ENCODE measurements at regions of chr2 and their contacts with region 1.

Region 1: DNA sequence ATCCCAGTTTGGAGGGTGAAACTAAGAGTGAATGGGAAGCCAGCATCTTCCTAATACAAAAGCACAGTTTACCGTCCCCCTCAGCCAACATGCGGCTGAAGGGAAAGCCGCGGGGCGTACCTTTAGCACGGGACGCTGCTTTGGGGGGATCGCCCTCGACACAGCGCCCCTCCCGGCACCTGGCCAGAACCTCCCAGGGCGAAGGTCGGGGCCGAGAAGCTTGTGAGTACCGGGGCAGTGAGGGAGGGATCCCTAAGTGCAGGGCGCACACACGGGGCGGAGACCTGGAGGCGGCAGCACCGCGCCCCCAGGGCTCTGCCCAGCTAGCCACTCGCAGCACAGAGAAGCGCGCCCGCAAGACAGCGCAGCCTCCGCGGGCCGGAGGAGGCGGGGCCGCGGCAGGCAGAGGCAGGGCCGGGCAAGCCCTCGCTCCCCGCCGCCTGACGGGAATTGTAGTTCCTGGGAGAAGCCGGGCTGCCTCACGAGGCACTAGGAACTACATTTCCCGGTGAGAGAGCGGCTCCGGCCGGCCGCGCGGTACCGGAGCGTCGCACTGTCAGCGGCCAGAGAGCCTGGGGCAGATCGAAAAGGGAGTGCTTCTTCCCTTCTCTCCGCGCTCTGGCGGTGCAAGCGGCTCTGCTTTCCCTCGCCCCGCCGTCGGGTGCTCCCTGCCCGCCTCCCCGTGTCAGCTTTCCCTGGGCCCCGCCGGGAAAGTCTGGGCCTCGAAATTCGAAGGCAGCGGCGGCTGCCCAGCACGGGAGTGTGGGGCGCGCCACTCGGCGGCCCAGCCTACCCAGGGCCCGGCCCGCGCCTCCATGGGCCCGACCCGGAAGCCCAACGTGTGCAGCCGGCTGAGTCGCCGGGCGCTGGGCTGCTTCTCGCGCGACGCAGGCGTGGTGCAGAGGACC is at the starts of genes DCAF17 and METTL8:
- DNase-seq: peak; percentile 97
- ATAC-seq: peak; percentile 99
- total RNA-seq, gene DCAF17: 5.8 TPM
- total RNA-seq, gene METTL8: 8.2 TPM

Region 2: DNA sequence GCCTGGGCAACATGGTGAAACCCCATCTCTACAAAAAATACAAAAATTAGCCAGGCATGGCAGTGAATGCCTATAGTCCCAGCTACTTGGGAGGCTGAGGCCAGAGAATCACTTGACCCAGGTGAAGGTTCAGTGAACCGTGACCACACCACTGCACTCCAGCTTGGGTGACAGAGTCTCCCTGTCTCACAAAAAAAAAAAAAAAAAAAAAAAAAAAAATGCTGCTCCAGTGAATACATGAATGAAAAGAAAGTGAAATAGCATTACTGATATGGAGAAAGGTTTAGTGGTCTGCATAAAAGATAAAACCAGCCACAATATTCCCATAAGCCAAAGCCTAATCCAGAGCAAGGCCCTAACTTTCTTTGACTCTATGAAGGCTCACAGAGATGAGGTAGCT is 44.7 kb before region 1 on chr2:
- intact Hi-C with region 1: no loop called
- DNase-seq: no peak
- ATAC-seq: no peak

Region 3: DNA sequence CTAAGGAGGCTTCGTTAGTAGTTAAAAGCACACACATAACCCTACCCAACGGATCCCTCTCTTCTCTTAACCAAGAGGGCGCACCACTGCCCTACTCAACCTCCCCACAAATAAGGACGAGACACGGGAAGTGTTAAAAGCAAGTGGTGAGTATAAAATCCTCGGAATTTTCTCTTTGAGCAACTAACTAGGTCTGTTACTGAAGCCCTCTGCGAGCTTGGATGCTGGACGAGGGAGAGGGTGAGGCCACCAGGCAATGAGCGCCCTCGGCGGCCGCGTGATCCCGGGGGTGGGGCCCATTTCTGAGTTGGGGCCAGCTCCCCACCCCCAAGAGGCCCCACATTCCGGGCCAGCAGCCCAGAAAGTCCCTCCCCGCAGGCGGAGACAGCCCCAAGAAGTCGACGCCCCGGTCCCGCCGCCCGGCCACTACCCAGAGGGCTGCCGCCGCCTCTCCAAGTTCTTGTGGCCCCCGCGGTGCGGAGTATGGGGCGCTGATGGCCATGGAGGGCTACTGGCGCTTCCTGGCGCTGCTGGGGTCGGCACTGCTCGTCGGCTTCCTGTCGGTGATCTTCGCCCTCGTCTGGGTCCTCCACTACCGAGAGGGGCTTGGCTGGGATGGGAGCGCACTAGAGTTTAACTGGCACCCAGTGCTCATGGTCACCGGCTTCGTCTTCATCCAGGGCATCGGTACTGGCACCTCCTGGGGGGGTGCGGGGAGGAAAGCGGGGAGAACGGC is 88.2 kb after region 1 on chr2 and contains the start of gene CYBRD1:
- intact Hi-C with region 1: loop called (anchors 10 kb)
- DNase-seq: peak; percentile 92
- ATAC-seq: peak; percentile 88
- total RNA-seq, gene CYBRD1: 55.0 TPM

Region 4: DNA sequence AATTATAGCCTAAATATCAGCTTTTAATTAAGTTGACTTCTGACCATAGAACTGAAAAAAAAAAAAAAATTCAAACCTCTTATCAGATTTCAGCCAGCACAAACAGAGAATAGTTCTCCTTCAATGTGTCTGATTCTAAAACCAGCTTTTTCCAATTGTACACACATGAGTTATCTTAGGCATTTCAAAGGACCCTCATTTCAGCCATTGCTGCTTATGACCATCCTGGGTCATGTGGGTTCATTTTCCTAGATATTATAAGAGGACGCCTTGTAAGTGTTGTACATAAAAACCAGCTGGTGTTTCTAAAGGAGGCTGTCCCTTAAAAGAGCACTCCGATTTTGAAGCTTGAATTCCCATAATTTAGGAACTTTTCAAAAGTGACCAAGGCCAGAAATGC is 191.0 kb after region 1 on chr2:
- intact Hi-C with region 1: no loop called
- DNase-seq: no peak
- ATAC-seq: no peak

Region 5: GRCh38 chr2:171957061-171957460 is 523.0 kb after region 1 on chr2:
- intact Hi-C with region 1: no loop called
- DNase-seq: no peak
- ATAC-seq: no peak

Region 6: DNA sequence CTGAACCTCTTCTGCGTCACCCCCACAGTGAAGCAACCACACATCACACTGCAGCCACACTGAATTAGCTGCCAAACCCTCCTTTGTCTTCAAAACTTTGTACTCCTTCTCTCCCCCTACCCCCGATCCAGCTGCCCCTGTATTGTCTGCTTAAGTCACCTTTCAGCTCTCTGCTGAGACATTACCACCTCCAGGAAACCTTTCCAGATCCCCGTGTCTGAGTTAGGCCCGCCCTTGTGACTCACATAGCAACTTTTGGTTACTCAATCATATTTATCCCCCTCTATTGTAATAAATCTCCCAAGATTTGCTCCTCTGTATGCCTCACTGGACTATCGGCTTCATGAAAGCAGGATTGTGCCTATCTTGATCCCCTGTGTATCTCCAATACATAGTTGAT is 1837.8 kb after region 1 on chr2:
- intact Hi-C with region 1: no loop called
- DNase-seq: no peak
- ATAC-seq: no peak

Measured in left ventricle myocardium superior (tissue), 1 donor.